ENCODE measurements at regions of chr14 and their contacts with region 1.

Region 1: GRCh38 chr14:63437953-63438757 is 105.0 kb downstream of the PPP2R5E start:
- DNase-seq: peak in 1 of 2 donors; percentile 37
- ATAC-seq: peak; percentile 6 to 17
- H3K4me3 ChIP-seq: peak overlapping the region in 3 of 4 donors; percentile 11 to 23 (median 16)
- H3K27ac ChIP-seq: peak overlapping the region; percentile 74 to 88 (median 85)
- H3K4me1 ChIP-seq: peaks cover 58 to 68% of the 10 kb centered on the region in 2 donors
- H3K27me3 ChIP-seq: no peaks in the 10 kb centered on the region
- CTCF ChIP-seq: peak in 1 of 5 experiments; percentile 36
- POLR2A ChIP-seq: no peak

Region 2: GRCh38 chr14:63096186-63096585 is 342.0 kb before region 1 on chr14:
- in situ Hi-C with region 1: no loop called
- intact Hi-C with region 1: no loop called
- DNase-seq: no peak
- ATAC-seq: no peak
- H3K4me3 ChIP-seq: no peak overlapping the region
- H3K27ac ChIP-seq: no peak overlapping the region
- H3K4me1 ChIP-seq: no peaks in the 10 kb centered on the region
- H3K27me3 ChIP-seq: no peaks in the 10 kb centered on the region
- CTCF ChIP-seq: no peak
- POLR2A ChIP-seq: no peak

Region 3: DNA sequence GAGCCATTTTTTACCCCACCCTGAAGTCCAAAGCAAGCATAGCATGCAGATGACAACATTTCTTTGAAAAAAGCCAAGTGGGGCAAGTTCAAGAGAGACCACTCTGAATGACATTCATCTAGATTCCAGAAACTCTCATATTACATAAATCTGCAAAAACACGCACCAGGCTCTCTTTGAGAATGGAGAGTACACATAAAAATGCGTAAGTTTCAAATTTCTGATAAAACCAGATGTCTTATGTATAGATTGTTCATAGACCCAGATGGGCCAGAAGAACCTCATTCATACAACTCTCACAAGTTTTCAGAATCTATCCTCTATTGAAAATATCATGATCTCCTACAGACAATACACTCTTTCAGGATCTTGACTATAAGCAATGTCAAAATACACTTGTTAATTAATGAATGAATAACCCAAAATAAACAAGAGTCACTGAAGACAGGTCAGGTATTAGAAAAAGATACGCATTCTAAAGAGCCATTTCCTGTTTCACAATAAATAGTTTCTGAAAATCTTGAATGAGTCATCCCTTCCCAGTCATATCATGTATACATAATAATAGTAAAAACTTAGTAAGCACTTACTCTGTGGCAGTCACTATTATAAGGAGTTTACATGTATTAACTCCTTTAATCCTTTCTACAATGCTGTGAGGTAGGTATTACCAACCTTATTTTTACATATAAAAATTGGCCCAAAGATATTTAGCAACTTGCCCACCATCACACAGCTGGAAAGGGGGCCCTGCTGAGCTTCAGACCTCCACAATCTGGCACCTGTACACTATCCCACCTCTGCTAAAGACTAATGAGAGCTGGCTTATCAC is 33.0 kb after region 1 on chr14:
- in situ Hi-C with region 1: no loop called
- intact Hi-C with region 1: loop called (anchors 5 kb)
- DNase-seq: no peak
- ATAC-seq: peak; percentile 79 to 90
- H3K4me3 ChIP-seq: no peak overlapping the region
- H3K27ac ChIP-seq: peak overlapping the region in 2 of 4 donors; percentile 4 to 41
- H3K4me1 ChIP-seq: peaks cover 43 to 55% of the 10 kb centered on the region in 2 donors
- H3K27me3 ChIP-seq: no peaks in the 10 kb centered on the region
- CTCF ChIP-seq: no peak
- POLR2A ChIP-seq: no peak